T-cell (primary cell): ENCODE measurements at regions of chr13 and their contacts with region 1.

Region 1: GRCh38 chr13:99314640-99315176 is 7.5 kb upstream of the GPR183 start:
- DNase-seq: peak in 32 of 35 experiments; percentile 19 to 84 (median 58)
- ATAC-seq: peak; percentile 68 to 86 (median 76)
- H3K4me3 ChIP-seq: peak overlapping the region; percentile 35 to 49
- H3K4me3 Mint-ChIP-seq: peak overlapping the region; percentile 60 to 76 (median 69)
- H3K27ac ChIP-seq: peak overlapping the region; percentile 91
- H3K27ac Mint-ChIP-seq: peak overlapping the region; percentile 95 to 96
- H3K4me1 ChIP-seq: peaks cover 54 to 61% of the 10 kb centered on the region in 2 experiments
- H3K4me1 Mint-ChIP-seq: peaks cover 78 to 85% (median 82%) of the 10 kb centered on the region in 3 donors
- H3K27me3 ChIP-seq: no peaks in the 10 kb centered on the region
- H3K27me3 Mint-ChIP-seq: no peaks in the 10 kb centered on the region

Region 2: GRCh38 chr13:97934590-97934989 is 1380.1 kb before region 1 on chr13:
- CTCF ChIA-PET with region 1: no interaction called
- POLR2A ChIA-PET with region 1: no interaction called
- DNase-seq: no peak
- ATAC-seq: no peak
- H3K4me3 ChIP-seq: no peak overlapping the region
- H3K4me3 Mint-ChIP-seq: no peak overlapping the region
- H3K27ac ChIP-seq: no peak overlapping the region
- H3K27ac Mint-ChIP-seq: no peak overlapping the region
- H3K4me1 ChIP-seq: no peaks in the 10 kb centered on the region
- H3K4me1 Mint-ChIP-seq: no peaks in the 10 kb centered on the region
- H3K27me3 ChIP-seq: peaks cover 0 to 7% of the 10 kb centered on the region in 2 experiments
- H3K27me3 Mint-ChIP-seq: peaks cover 15 to 28% of the 10 kb centered on the region in 2 donors

Region 3: GRCh38 chr13:99296398-99296797 is 18.3 kb before region 1 on chr13:
- CTCF ChIA-PET with region 1: interaction called in 1 of 2 experiments, 3 read pairs
- POLR2A ChIA-PET with region 1: interaction called in 1 of 2 experiments, 14 read pairs
- DNase-seq: peak in 1 of 35 experiments; percentile 62
- ATAC-seq: peak; percentile 56 to 72 (median 68)
- H3K4me3 ChIP-seq: no peak overlapping the region
- H3K4me3 Mint-ChIP-seq: peak overlapping the region; percentile 67 to 85 (median 82)
- H3K27ac ChIP-seq: peak overlapping the region; percentile 80
- H3K27ac Mint-ChIP-seq: peak overlapping the region; percentile 97 to 99
- H3K4me1 ChIP-seq: peaks cover 32 to 53% of the 10 kb centered on the region in 2 experiments
- H3K4me1 Mint-ChIP-seq: peaks cover 83 to 89% (median 85%) of the 10 kb centered on the region in 3 donors
- H3K27me3 ChIP-seq: no peaks in the 10 kb centered on the region
- H3K27me3 Mint-ChIP-seq: no peaks in the 10 kb centered on the region

Region 4: GRCh38 chr13:99380921-99381645 is 66.4 kb after region 1 on chr13:
- CTCF ChIA-PET with region 1: no interaction called
- POLR2A ChIA-PET with region 1: no interaction called
- DNase-seq: peak; percentile 42 to 76 (median 63)
- ATAC-seq: peak; percentile 44 to 72 (median 66)
- H3K4me3 ChIP-seq: no peak overlapping the region
- H3K4me3 Mint-ChIP-seq: peak overlapping the region in 2 of 3 donors; percentile 47 to 75
- H3K27ac ChIP-seq: peak overlapping the region; percentile 81
- H3K27ac Mint-ChIP-seq: peak overlapping the region; percentile 98
- H3K4me1 ChIP-seq: peaks cover 66 to 85% of the 10 kb centered on the region in 2 experiments
- H3K4me1 Mint-ChIP-seq: peaks cover 89 to 96% (median 96%) of the 10 kb centered on the region in 3 donors
- H3K27me3 ChIP-seq: no peaks in the 10 kb centered on the region
- H3K27me3 Mint-ChIP-seq: no peaks in the 10 kb centered on the region